ENCODE measurements at regions of chrX and their contacts with region 1.

Region 1: DNA sequence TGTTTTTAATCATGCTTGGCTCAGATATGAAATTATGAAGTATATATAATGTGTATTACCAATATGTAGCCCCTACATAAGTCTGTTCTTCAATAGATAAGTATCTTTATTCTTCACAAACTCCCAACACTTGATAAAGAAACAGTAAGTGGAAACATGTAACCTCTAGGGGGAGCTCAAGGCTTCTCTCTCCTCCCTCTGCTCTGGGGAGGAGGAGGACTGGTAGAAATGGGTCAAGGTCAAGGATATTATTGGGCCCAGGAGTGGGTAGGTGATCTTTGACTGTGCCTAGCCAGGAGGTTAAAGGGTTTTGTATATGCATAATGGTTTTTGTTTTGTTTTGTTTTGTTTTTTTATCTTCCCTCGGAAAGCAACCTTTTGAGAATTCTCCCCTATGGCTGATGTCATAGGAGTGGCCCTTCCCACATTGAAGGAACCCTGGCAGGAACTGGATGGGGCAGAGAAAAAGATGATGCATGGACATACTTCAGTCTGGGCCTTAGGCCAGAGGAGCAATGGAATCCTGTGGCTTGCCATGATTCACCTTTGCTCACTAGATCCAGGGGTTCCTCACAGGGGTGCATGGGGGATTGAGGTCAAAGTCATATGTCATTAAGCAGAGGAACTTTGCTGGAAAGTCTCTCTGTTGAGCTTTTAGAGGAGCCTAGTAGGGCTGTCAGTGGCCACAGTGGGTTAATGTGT is 460.3 kb downstream of the MID1IP1 start:
- DNase-seq: no peak
- ATAC-seq: no peak

Region 2: GRCh38 chrX:39445336-39445735 is 183.7 kb after region 1 on chrX:
- intact Hi-C with region 1: loop called in 1 of 2 experiments (anchors 10 kb)
- DNase-seq: no peak
- ATAC-seq: no peak

Region 3: DNA sequence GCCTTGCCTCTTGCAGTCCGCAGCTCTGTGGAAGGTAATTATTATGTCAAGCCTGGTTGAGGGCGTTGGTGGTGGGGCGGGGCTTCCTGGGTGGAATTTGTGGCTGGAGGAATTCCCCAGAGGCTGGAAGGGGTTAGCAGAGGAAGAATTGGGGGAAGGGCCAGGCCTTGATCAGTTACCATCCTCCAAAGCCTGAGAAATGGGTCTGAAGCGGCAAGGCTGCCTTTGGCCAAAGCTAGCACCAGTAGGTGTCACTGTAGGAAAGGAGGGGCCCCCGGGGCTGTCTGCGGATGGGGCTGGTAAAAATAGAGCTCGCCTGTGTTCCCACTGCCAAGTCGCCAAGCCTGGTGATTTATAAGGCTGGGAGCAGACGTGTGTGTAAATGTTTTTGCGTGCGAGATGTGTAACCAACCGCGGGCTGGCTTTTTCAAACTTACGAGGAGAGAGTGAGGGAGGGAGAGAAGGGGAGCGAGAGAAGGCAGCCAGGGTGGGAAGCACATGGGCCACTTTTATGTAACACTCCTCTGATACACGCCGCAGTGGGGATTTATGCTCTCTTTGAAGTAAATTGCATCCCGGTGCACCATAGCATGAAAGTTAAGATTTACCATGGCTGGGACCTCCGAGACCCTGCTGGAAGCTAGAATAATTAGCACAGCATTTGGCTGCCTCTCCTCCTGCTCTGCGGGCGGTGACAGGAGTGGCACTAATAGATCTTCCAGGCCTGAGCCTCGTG is 469.2 kb after region 1 on chrX:
- intact Hi-C with region 1: loop called in 1 of 2 experiments (anchors 10 kb)
- DNase-seq: peak; percentile 80
- ATAC-seq: peak; percentile 80 to 84

Measured in left cardiac atrium (tissue), 4 donors.